GM23248 (cell line): ENCODE measurements at regions of chr7 and their contacts with region 1.

Region 1: DNA sequence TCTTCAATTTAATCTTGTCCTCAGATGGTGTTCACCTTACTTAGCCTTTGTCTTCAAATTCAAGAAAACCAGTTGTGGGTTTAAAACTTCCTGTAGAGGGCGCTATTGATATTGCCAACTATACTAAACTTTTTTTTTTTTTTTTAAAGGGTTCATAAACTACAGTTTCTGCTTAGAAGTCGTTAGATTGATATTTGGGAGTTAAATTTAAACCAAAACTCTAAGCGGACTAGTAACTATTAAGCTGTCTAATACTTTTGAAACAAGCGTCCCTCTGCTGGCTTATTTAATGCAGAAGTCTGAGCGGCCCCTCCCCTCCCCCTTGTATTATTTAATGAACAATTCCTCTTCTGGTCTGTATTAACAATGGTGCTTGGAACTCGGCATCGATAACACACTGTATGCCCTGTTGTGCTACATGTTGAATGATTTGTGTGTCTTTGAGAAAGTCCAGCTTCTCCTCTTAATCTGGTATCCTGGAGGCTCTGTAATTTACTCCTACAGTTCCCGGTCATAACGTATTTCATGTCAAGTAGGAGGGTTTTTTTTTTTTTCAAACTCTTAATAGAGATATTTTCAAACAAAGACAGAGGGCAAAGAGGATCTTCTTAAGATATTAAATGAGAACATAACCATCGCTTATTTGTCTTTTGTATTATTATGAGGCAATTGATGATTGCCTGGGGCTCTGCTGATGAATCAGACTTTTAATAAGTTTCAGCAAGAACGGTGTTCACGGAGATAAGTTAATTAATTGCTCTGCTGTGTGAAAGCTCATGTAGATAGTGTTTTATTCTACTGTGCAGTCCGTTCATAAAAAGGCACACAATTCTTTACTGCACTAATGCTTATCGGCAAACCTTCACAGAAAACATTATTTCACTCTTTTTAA is 22.6 kb upstream of the CREB5 start:
- DNase-seq: peak; percentile 77
- H3K4me3 ChIP-seq: peak overlapping the region; percentile 83
- H3K27ac ChIP-seq: no peak overlapping the region
- H3K4me1 ChIP-seq: peaks cover 9% of the 10 kb centered on the region
- H3K27me3 ChIP-seq: no peaks in the 10 kb centered on the region

Region 2: DNA sequence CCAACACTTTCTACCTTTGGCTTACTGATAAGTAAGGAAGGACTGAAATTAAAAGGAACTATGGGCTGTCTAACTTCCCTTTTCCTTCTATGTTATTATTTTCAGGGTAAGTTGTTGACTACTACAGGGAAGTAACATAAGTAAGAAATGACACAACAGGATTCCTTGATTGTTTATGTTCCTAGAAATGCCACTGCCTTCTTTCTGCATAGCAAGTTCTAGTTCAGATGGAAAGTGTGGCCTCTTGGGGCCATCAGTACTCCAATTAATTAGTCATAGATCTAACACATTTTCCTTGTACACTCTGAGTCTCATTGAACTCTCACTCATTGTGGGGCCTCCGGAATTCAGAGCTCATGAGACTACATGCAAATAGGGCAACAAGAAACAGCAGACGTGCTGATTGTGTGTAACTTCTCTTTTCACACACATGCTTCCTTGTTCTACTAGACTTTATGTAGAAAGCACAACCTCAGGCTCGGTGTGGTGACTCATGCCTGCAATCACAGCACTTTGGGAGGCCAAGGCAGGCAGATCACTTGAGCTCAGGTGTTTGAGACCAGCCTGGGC is 691.8 kb before region 1 on chr7:
- in situ Hi-C with region 1: no loop called
- DNase-seq: peak; percentile 33
- H3K4me3 ChIP-seq: no peak overlapping the region
- H3K27ac ChIP-seq: no peak overlapping the region
- H3K4me1 ChIP-seq: peaks cover 10% of the 10 kb centered on the region; the same call in 1 of the 2 replicates
- H3K27me3 ChIP-seq: no peaks in the 10 kb centered on the region

Region 3: GRCh38 chr7:28853834-28854749 is 464.3 kb after region 1 on chr7:
- in situ Hi-C with region 1: loop called (anchors 10 kb)
- DNase-seq: peak; percentile 79
- H3K4me3 ChIP-seq: peak overlapping the region; percentile 75
- H3K27ac ChIP-seq: no peak overlapping the region
- H3K4me1 ChIP-seq: peaks cover 55% of the 10 kb centered on the region
- H3K27me3 ChIP-seq: no peaks in the 10 kb centered on the region

Region 4: DNA sequence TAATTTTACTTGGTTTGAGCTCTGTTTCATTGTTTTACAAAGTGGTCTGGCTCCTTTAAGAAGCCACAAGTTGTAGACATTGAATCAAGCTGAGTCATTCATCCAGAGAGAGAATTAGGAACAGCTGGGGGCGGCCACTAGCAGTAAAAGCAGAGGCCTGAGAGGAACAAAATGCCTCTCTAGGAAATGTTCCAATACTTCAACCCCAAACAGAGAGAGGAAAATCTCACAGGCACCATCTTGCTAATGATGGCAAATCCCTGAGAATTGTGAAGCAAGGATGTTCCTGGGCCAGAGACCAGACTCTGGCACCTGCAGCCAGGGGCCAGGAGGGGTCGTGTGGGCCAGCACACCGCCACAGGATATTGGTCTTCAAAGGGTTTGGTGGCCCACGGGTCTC is 594.9 kb after region 1 on chr7:
- in situ Hi-C with region 1: no loop called
- DNase-seq: peak; percentile 94
- H3K4me3 ChIP-seq: no peak overlapping the region
- H3K27ac ChIP-seq: peak overlapping the region; percentile 52
- H3K4me1 ChIP-seq: peaks cover 59% of the 10 kb centered on the region
- H3K27me3 ChIP-seq: no peaks in the 10 kb centered on the region

Region 5: DNA sequence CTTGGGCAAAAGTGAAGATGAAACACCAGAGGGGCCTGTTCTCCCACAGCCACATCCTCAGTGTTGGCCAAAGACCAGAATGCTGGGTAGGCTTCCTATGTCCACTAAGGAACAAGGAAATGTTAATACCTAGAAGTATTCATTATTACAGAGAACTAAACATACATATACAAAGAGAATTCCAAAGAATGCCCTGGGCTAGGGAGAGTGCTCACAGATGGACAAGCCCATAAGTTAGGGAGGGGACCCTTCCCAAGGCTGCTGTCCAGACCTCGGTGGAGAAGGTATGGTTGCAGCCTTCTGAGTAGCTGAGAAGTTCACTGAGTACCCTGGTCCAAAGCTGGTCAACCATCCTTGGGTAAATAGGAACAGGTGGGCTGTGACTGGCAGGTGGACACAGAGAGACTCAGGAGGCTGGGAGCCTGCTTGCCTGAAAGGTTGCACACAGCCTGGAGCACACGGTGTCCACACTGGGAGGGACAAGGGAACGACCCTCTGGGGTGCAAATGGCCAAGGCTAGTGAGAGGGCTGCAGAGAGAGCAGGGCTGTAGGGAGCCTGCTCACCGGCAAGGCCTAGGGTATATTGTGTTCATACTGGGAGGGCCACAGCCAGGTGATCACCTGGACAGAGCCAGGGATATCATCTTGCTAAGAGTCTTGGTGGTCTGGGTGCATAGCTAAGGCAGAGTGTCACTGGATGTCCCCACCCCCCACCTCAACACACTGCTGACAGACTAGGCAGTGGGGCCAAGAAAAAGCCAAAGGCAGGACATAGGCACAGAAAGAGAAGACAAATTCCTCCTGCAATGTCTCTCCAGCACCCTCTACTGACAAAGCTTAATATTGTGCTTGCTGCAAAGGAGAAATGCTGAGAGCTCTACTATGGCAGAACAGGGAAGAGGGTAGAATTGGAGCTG is 716.3 kb after region 1 on chr7:
- in situ Hi-C with region 1: loop called (anchors 25 kb)
- DNase-seq: peak; percentile 77
- H3K4me3 ChIP-seq: no peak overlapping the region
- H3K27ac ChIP-seq: no peak overlapping the region
- H3K4me1 ChIP-seq: no peaks in the 10 kb centered on the region; the same call in 1 of the 2 replicates
- H3K27me3 ChIP-seq: peaks cover 25% of the 10 kb centered on the region